CD4-positive, alpha-beta T cell (primary cell): ENCODE measurements at regions of chr9 and their contacts with region 1.

Region 1: DNA sequence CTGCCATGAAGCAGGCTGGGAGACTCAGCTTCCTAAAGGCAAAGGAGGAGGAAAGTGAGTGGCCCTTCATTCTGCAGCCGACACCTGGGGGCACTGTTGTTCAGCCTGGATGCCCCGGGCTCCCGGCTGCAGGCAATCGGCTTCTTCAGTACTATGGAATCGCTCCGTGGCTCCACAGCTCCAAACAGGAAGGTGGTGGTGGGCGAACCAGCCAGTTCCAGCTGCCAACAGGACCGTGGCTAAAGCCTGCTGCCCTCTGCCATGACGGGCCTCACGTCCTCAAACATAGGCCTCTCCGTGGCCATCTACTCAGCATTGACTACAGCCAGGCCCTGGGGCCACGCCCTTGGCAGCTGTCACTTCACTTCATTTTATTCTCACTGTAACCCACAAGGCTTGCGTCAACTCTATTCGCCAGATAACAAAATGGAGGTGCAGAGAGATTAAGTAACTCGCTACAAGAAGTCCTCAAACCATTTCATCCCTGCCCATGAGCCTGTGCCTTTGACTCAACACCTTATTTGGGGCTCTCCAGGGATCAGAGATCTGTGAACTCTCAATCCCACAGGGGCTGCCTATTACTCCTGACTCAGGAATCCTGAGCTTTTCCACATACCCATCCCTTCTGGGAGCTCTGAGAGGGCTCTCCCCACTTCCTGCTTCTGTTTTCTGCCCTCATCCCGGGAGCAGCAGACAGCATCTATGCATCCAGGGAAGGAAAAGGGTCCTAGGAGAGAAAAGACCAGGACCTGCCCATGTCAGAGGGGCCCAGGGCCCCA is 38.0 kb downstream of the PAX5 start:
- DNase-seq: peak; percentile 15 to 73 (median 48)
- ATAC-seq: peak; percentile 64
- H3K4me3 ChIP-seq: peak overlapping the region; percentile 24
- H3K4me3 Mint-ChIP-seq: peak overlapping the region; percentile 45
- H3K27ac ChIP-seq: no peak overlapping the region
- H3K27ac Mint-ChIP-seq: no peak overlapping the region
- H3K4me1 ChIP-seq: peaks cover 5% of the 10 kb centered on the region
- H3K4me1 Mint-ChIP-seq: no peaks in the 10 kb centered on the region
- H3K27me3 ChIP-seq: peaks cover 6 to 13% of the 10 kb centered on the region in 2 experiments
- H3K27me3 Mint-ChIP-seq: peaks cover 55% of the 10 kb centered on the region
- CTCF ChIP-seq: peak; percentile 63

Region 2: GRCh38 chr9:37262410-37262809 is 266.3 kb after region 1 on chr9:
- CTCF ChIA-PET with region 1: interaction called, 3 read pairs
- POLR2A ChIA-PET with region 1: no interaction called
- intact Hi-C with region 1: loop called in 1 of 2 experiments (anchors 5 kb)
- DNase-seq: no peak
- ATAC-seq: no peak
- H3K4me3 ChIP-seq: no peak overlapping the region
- H3K4me3 Mint-ChIP-seq: no peak overlapping the region
- H3K27ac ChIP-seq: no peak overlapping the region
- H3K27ac Mint-ChIP-seq: no peak overlapping the region
- H3K4me1 ChIP-seq: no peaks in the 10 kb centered on the region
- H3K4me1 Mint-ChIP-seq: no peaks in the 10 kb centered on the region
- H3K27me3 ChIP-seq: no peaks in the 10 kb centered on the region
- H3K27me3 Mint-ChIP-seq: no peaks in the 10 kb centered on the region
- CTCF ChIP-seq: peak; percentile 13

Region 3: DNA sequence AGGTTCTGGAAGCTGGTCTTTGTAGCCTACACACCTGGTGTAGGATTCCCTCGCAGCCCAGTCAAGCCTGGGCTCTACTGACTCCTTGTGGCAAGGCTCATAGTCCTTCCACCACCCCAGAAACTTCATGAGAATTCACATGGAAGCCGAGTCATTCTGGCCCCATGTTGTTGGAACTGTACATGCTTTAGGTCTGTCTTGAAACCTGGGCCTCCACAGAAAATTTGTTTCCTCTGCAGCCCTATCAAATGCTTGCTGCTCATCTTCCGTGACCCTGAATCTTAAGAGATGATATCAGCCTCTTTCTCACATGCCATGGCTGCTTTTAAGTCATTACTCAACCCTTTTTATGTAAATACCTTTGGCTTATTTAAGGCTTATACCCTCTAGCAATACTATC is 313.0 kb after region 1 on chr9:
- CTCF ChIA-PET with region 1: no interaction called
- POLR2A ChIA-PET with region 1: no interaction called
- intact Hi-C with region 1: loop called (anchors 1 to 5 kb)
- DNase-seq: peak in 5 of 14 experiments; percentile 5 to 38 (median 16)
- ATAC-seq: no peak
- H3K4me3 ChIP-seq: no peak overlapping the region
- H3K4me3 Mint-ChIP-seq: no peak overlapping the region
- H3K27ac ChIP-seq: no peak overlapping the region
- H3K27ac Mint-ChIP-seq: no peak overlapping the region
- H3K4me1 ChIP-seq: no peaks in the 10 kb centered on the region
- H3K4me1 Mint-ChIP-seq: peaks cover 5% of the 10 kb centered on the region
- H3K27me3 ChIP-seq: no peaks in the 10 kb centered on the region
- H3K27me3 Mint-ChIP-seq: no peaks in the 10 kb centered on the region
- CTCF ChIP-seq: peak; percentile 16

Region 4: DNA sequence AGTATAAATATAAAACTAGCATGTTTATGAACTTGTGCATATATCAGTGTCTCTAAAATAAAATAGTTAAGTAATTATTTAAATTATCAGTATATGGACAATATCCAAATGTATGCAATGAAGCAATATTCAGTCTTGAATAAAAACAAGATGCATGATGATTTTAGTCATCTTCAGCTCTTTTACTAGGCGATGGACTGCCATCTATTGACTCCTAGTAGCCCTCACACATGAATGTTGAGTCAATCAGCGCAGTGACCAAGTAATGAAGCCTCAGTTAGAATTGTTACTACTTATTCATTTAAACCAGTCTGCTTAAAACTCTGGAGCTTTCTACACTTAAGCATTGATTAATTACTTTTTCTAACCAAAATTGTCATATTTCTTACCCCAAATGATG is 333.5 kb after region 1 on chr9:
- CTCF ChIA-PET with region 1: interaction called, 12 read pairs
- POLR2A ChIA-PET with region 1: no interaction called
- intact Hi-C with region 1: loop called (anchors 1 to 5 kb)
- DNase-seq: peak in 4 of 14 experiments; percentile 7 to 45 (median 42)
- ATAC-seq: no peak
- H3K4me3 ChIP-seq: no peak overlapping the region
- H3K4me3 Mint-ChIP-seq: no peak overlapping the region
- H3K27ac ChIP-seq: no peak overlapping the region
- H3K27ac Mint-ChIP-seq: no peak overlapping the region
- H3K4me1 ChIP-seq: no peaks in the 10 kb centered on the region
- H3K4me1 Mint-ChIP-seq: peaks cover 2% of the 10 kb centered on the region
- H3K27me3 ChIP-seq: no peaks in the 10 kb centered on the region
- H3K27me3 Mint-ChIP-seq: no peaks in the 10 kb centered on the region
- CTCF ChIP-seq: no peak

Region 5: DNA sequence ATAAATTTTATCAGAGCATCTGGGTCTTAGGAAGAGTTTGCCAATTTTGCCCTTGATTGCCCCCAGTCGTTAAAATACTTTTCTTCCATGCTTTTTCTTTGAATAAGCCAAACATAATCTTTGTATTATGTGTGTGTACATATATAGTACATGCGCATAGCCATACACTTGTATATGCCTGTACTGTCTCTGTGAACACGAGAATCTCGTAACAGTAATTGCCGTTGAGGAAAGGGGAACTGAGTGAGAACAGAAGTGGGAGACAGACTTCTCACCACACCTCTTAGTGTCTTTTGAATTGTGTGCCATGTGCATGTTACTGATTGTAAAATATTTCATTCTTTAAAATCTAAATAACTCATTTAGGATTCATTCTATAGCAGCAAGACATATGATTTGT is 346.8 kb after region 1 on chr9:
- CTCF ChIA-PET with region 1: no interaction called
- POLR2A ChIA-PET with region 1: no interaction called
- intact Hi-C with region 1: no loop called
- DNase-seq: no peak
- ATAC-seq: no peak
- H3K4me3 ChIP-seq: no peak overlapping the region
- H3K4me3 Mint-ChIP-seq: no peak overlapping the region
- H3K27ac ChIP-seq: no peak overlapping the region
- H3K27ac Mint-ChIP-seq: no peak overlapping the region
- H3K4me1 ChIP-seq: no peaks in the 10 kb centered on the region
- H3K4me1 Mint-ChIP-seq: no peaks in the 10 kb centered on the region
- H3K27me3 ChIP-seq: no peaks in the 10 kb centered on the region
- H3K27me3 Mint-ChIP-seq: no peaks in the 10 kb centered on the region
- CTCF ChIP-seq: no peak

Region 6: DNA sequence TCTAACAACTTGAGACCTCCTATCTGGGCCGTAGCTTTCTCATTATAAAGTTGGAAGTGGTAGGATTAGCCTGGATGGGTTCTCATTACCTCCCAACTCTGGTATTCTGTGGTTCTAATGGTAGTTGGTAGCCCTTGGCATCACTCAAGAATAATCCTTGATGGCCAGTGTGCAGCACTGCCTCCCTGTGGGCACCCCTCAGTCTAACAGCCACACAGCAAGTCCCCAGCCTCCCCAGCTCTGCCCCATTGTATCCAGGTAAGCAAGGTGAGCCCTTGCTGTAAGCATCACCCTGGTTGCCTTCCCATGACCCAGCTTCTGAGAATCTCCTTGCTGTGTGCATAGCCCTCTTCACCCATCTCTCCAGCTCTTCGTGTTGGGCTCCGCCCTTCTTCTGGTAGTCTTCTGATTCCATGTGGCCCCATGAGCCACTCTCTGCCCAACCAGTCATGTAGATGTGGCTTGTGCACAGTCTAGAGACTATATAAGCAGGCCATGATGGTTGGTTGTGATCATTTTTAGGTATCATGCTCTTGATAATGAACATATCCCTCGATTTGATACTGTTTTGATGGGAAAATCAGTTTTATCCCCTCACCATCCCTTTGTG is 368.7 kb after region 1 on chr9:
- CTCF ChIA-PET with region 1: no interaction called
- POLR2A ChIA-PET with region 1: no interaction called
- intact Hi-C with region 1: loop called in 1 of 2 experiments (anchors 10 kb)
- DNase-seq: peak in 4 of 14 experiments; percentile 9 to 26 (median 22)
- ATAC-seq: no peak
- H3K4me3 ChIP-seq: no peak overlapping the region
- H3K4me3 Mint-ChIP-seq: no peak overlapping the region
- H3K27ac ChIP-seq: no peak overlapping the region
- H3K27ac Mint-ChIP-seq: no peak overlapping the region
- H3K4me1 ChIP-seq: no peaks in the 10 kb centered on the region
- H3K4me1 Mint-ChIP-seq: no peaks in the 10 kb centered on the region
- H3K27me3 ChIP-seq: no peaks in the 10 kb centered on the region
- H3K27me3 Mint-ChIP-seq: no peaks in the 10 kb centered on the region
- CTCF ChIP-seq: no peak

Region 7: DNA sequence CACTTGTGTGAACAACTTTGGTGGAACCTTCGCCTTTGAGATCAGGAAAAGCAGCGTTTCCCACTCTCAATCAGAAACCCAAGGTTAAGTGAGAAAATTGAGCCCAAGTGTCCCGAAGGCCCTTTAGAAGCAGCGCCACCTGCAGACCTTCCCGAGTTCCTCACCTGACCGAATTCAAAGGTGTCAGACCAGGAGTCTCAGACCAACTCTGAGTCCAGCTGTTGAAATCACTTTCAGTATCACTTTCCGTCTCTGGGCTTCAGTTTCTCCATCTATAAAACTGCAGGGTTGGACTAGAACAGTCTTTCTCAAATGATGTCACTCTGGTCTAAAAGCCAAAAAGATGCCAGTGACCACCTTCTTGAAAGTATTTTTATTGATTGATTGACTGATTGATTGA is 394.6 kb after region 1 on chr9:
- CTCF ChIA-PET with region 1: interaction called, 6 read pairs
- POLR2A ChIA-PET with region 1: no interaction called
- intact Hi-C with region 1: loop called (anchors 5 to 10 kb)
- DNase-seq: peak in 7 of 14 experiments; percentile 7 to 53 (median 39)
- ATAC-seq: no peak
- H3K4me3 ChIP-seq: no peak overlapping the region
- H3K4me3 Mint-ChIP-seq: no peak overlapping the region
- H3K27ac ChIP-seq: no peak overlapping the region
- H3K27ac Mint-ChIP-seq: no peak overlapping the region
- H3K4me1 ChIP-seq: no peaks in the 10 kb centered on the region
- H3K4me1 Mint-ChIP-seq: no peaks in the 10 kb centered on the region
- H3K27me3 ChIP-seq: no peaks in the 10 kb centered on the region
- H3K27me3 Mint-ChIP-seq: no peaks in the 10 kb centered on the region
- CTCF ChIP-seq: peak; percentile 28

Region 8: DNA sequence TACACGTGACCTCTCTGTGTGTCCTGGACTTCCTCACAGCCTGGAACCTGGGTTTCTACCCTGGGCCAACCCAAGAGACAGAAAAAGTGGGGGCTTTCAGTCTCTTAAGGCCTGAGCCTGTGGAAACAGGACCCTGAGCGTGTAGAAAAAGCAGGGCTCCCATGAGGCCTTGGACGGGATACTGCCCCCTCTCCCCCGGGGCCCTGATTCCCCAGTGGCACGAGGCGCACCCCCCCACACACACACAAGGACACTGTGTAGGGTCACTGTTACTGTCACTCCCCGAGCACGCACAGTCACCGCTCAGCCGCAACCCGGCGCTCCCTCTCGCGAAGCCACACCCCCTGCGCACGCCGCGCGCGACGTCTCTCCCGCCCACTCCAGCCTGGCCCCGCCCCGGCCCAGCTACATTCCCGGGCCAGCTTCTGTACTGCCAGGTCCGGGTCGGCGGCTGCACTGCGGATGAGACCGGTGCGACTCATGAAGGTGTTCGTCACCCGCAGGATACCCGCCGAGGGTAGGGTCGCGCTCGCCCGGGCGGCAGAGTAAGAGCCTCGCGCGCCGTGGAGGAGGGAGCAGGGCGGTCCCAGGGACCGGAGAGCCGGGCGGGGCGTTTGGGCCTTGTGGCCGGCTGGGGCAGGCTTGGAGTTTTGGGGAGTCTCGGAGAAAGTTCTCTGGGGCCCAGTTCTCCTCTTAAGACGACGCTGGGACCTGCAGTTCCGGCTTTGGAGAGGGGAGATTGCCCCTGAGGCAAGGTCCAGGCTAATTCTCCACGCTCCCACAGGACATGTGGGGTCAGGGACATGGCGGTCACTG is 426.4 kb after region 1 on chr9 and contains the start of gene GRHPR:
- CTCF ChIA-PET with region 1: no interaction called
- POLR2A ChIA-PET with region 1: no interaction called
- intact Hi-C with region 1: no loop called
- DNase-seq: peak; percentile 80 to 95 (median 88)
- ATAC-seq: peak; percentile 99
- H3K4me3 ChIP-seq: peak within 1 kb of the TSS; percentile 86
- H3K4me3 Mint-ChIP-seq: peak within 1 kb of the TSS; percentile 96
- H3K27ac ChIP-seq: peak within 1 kb of the TSS; percentile 73 to 80
- H3K27ac Mint-ChIP-seq: peak within 1 kb of the TSS; percentile 90
- H3K4me1 ChIP-seq: peaks cover 34% of the 10 kb centered on the region
- H3K4me1 Mint-ChIP-seq: peaks cover 28% of the 10 kb centered on the region
- H3K27me3 ChIP-seq: no peaks in the 10 kb centered on the region
- H3K27me3 Mint-ChIP-seq: no peaks in the 10 kb centered on the region
- CTCF ChIP-seq: no peak
- total RNA-seq, gene GRHPR: 29.0 to 29.6 TPM

Region 9: GRCh38 chr9:37511016-37512010 is 515.2 kb after region 1 on chr9:
- CTCF ChIA-PET with region 1: no interaction called
- POLR2A ChIA-PET with region 1: no interaction called
- intact Hi-C with region 1: loop called in 1 of 2 experiments (anchors 5 kb)
- DNase-seq: no peak
- ATAC-seq: no peak
- H3K4me3 ChIP-seq: no peak overlapping the region
- H3K4me3 Mint-ChIP-seq: no peak overlapping the region
- H3K27ac ChIP-seq: no peak overlapping the region
- H3K27ac Mint-ChIP-seq: no peak overlapping the region
- H3K4me1 ChIP-seq: peaks cover 9% of the 10 kb centered on the region
- H3K4me1 Mint-ChIP-seq: no peaks in the 10 kb centered on the region
- H3K27me3 ChIP-seq: no peaks in the 10 kb centered on the region
- H3K27me3 Mint-ChIP-seq: no peaks in the 10 kb centered on the region
- CTCF ChIP-seq: no peak